ENCODE measurements at regions of chr10 and their contacts with region 1.

Region 1: DNA sequence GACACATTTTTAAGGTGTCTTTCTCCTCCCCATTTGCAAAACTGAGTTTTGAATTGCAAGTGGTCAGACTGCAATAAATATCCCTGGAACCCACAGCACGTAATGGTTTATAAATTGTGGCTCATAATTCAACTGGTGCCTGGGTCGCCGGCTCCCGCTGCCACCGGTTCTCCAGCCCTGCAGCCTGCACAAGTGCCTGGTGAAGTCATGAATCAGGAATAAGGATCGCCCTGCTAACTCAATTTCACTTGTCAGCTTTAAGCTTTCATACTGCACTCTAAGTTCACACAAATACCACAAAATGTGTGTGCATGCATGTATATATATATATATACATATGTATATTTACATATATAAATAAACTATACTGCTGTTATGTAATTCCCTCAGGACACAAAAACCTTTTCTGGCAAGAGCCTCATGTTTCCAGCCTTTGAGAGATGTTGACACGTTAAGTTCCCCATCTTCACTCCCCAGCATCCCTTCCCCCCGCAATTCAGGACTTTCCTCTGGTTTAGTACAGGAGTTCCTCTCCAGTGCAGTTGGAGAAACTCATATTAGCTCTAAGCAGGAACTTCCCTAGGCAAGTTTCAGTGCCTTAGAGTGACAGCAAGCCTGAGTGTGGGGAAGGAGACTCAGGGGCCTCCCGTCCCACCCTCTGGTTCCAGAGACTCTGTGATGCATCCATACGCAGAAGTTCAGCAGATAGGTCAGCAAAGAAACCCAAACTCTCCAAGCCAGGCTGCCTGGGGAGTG is 129.2 kb upstream of the UNC5B start:
- DNase-seq: no peak
- H3K4me3 ChIP-seq: no peak overlapping the region
- H3K4me3 Mint-ChIP-seq: no peak overlapping the region
- H3K27ac ChIP-seq: no peak overlapping the region
- H3K27ac Mint-ChIP-seq: no peak overlapping the region
- H3K4me1 ChIP-seq: no peaks in the 10 kb centered on the region
- H3K4me1 Mint-ChIP-seq: no peaks in the 10 kb centered on the region
- H3K27me3 ChIP-seq: no peaks in the 10 kb centered on the region
- H3K27me3 Mint-ChIP-seq: no peaks in the 10 kb centered on the region

Region 2: GRCh38 chr10:71127167-71127503 is 44.0 kb after region 1 on chr10:
- CTCF ChIA-PET with region 1: no interaction called
- POLR2A ChIA-PET with region 1: no interaction called
- intact Hi-C with region 1: loop called (anchors 2 kb)
- DNase-seq: no peak
- H3K4me3 ChIP-seq: no peak overlapping the region
- H3K4me3 Mint-ChIP-seq: no peak overlapping the region
- H3K27ac ChIP-seq: no peak overlapping the region
- H3K27ac Mint-ChIP-seq: no peak overlapping the region
- H3K4me1 ChIP-seq: no peaks in the 10 kb centered on the region
- H3K4me1 Mint-ChIP-seq: peaks cover 0 to 7% (median 5%) of the 10 kb centered on the region in 4 donors
- H3K27me3 ChIP-seq: peaks cover 3% of the 10 kb centered on the region
- H3K27me3 Mint-ChIP-seq: peaks cover 29 to 36% of the 10 kb centered on the region in 2 donors